Transverse colon (tissue), 4 donors: ENCODE measurements at regions of chr15 and their contacts with region 1.

Region 1: DNA sequence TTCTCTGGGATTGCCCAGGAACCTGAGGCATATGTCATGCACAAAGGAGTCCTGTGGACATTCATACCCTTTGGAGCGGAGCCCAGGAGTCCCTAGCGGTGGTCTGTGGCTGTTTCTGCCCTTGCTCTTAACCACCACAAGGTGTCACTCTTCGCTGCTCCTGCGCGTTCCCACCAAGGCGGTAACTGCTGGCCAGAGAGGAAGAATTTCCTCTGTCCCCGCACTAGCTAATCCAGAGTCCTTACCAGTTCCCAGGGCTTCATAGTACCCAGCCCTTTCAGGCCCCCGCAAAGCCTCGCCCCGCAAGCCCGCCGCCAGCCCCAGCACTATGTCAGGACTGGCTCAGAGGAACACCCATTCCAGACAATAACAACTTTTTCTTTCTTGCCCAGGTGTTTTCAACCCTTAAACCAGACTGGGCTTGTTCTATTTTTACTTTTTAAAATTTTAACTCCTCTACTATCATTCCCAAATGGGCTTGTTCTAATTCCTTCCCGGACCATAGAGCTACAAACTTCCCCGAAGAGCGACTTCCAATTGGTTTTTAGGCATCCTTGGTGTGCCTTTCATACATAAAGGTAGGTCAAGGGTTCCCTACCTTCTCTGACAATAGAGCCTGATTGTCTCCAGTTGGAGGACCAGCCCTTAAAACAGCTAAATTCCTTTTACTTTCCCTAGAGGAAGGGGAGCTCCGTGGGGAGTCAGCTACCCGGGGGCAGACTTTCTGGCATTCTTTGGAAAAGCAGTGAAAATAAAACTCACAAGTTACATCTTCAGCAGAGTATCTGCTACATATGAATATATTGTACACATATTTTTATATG is 31.8 kb upstream of the ZNF774 start:
- DNase-seq: peak; percentile 79
- H3K4me3 ChIP-seq: peak overlapping the region in 1 of 4 donors; percentile 37
- H3K27ac ChIP-seq: peak overlapping the region; percentile 38 to 75 (median 58)
- H3K4me1 ChIP-seq: peaks cover 11 to 28% (median 20%) of the 10 kb centered on the region in 4 donors
- H3K27me3 ChIP-seq: no peaks in the 10 kb centered on the region
- CTCF ChIP-seq: peak; percentile 98 to 99 (median 99)
- EP300 ChIP-seq: no peak
- POLR2A ChIP-seq: no peak

Region 2: GRCh38 chr15:90436952-90437351 is 116.7 kb after region 1 on chr15:
- in situ Hi-C with region 1: no loop called
- intact Hi-C with region 1: no loop called
- DNase-seq: no peak
- H3K4me3 ChIP-seq: no peak overlapping the region
- H3K27ac ChIP-seq: no peak overlapping the region
- H3K4me1 ChIP-seq: peaks cover 6 to 39% (median 19%) of the 10 kb centered on the region in 4 donors
- H3K27me3 ChIP-seq: no peaks in the 10 kb centered on the region
- CTCF ChIP-seq: no peak
- EP300 ChIP-seq: no peak
- POLR2A ChIP-seq: no peak

Region 3: GRCh38 chr15:90482124-90483011 is 162.1 kb after region 1 on chr15:
- in situ Hi-C with region 1: loop called in 3 of 4 experiments (anchors 10 kb)
- intact Hi-C with region 1: loop called (anchors 2 kb)
- DNase-seq: peak; percentile 51
- H3K4me3 ChIP-seq: no peak overlapping the region
- H3K27ac ChIP-seq: peak overlapping the region in 1 of 4 donors; percentile 32
- H3K4me1 ChIP-seq: peaks cover 0 to 4% (median 0%) of the 10 kb centered on the region in 4 donors
- H3K27me3 ChIP-seq: no peaks in the 10 kb centered on the region
- CTCF ChIP-seq: peak; percentile 61 to 79 (median 77)
- EP300 ChIP-seq: no peak
- POLR2A ChIP-seq: no peak

Region 4: DNA sequence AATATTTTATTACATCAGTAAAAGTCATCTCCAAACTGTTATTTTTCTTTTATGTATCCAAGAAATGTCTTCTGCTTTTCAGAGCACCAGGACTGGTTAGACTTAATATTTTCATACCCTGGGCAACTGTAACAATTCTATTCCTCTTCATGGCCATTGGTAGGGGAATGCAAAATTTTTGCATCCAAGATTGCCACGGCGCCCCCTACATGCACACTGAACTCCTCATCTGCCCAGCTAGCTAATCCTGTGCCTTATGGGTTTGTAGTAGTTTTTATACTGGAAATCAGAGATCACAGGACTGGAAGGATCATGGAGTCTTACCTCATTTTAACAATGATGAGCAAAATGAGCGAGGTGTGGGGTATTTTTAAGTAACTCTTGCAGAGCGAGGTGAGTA is 283.6 kb after region 1 on chr15:
- in situ Hi-C with region 1: loop called in 1 of 4 experiments (anchors 25 kb)
- intact Hi-C with region 1: no loop called
- DNase-seq: peak; percentile 53
- H3K4me3 ChIP-seq: no peak overlapping the region
- H3K27ac ChIP-seq: no peak overlapping the region
- H3K4me1 ChIP-seq: peaks cover 0 to 11% (median 2%) of the 10 kb centered on the region in 4 donors
- H3K27me3 ChIP-seq: no peaks in the 10 kb centered on the region
- CTCF ChIP-seq: peak; percentile 30 to 38 (median 34)
- EP300 ChIP-seq: no peak
- POLR2A ChIP-seq: no peak